ENCODE measurements at regions of chr5 and their contacts with region 1.

Region 1: GRCh38 chr5:146173597-146173996 is 8.9 kb downstream of the LARS1 start:
- DNase-seq: peak; percentile 73
- H3K4me3 ChIP-seq: peak overlapping the region; percentile 35
- H3K27ac ChIP-seq: peak overlapping the region; percentile 91
- H3K4me1 ChIP-seq: peaks cover 31% of the 10 kb centered on the region
- CTCF ChIP-seq: no peak; the same call in 1 of the 2 replicates

Region 2: GRCh38 chr5:146188358-146188757 is 14.8 kb after region 1 on chr5:
- CTCF ChIA-PET with region 1: no interaction called
- POLR2A ChIA-PET with region 1: interaction called, 18 read pairs
- intact Hi-C with region 1: no loop called
- DNase-seq: no peak
- H3K4me3 ChIP-seq: no peak overlapping the region
- H3K27ac ChIP-seq: no peak overlapping the region
- H3K4me1 ChIP-seq: peaks cover 6% of the 10 kb centered on the region
- CTCF ChIP-seq: no peak